ENCODE measurements at regions of chr12 and their contacts with region 1.

Region 1: GRCh38 chr12:92928962-92929915 is at the start of gene EEA1:
- DNase-seq: peak; percentile 98
- H3K4me3 Mint-ChIP-seq: peak within 1 kb of the TSS; percentile 85
- H3K27ac Mint-ChIP-seq: peak within 1 kb of the TSS; percentile 95
- H3K4me1 Mint-ChIP-seq: peaks cover 32% of the 10 kb centered on the region
- H3K27me3 Mint-ChIP-seq: no peaks in the 10 kb centered on the region
- total RNA-seq, gene EEA1: 17.5 to 17.7 TPM

Region 2: DNA sequence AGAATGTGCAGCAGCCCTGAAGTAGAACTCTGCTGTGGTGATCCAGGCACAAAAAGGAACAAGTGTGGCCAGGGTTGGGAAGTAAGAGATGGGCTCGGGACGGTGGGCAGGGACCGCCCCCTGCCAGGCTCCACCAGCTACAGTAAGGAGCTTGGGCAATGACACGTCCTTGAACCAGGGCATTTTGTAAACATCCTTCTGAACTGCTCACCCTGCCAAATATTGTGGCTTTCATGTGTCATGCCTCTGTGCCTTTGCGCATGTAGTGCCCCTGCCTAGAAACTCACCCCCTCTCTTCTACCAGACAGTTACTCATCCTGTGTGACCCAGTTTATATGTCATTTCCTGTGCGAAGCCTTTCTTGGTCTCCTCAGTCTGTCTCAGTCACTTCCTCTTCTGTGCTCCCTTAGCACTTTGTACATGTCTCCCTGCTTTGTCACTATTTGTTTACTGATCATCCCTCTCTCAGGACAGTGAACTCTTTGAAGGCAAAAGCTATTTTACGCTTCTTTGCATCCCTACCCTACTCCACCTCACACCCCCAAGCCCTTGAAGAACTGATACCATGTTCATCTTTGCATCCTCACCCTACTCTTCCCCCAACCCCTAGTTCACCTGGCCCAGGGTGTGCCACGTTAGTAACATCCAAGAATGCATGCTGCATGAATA is 335.4 kb before region 1 on chr12:
- CTCF ChIA-PET with region 1: no interaction called
- POLR2A ChIA-PET with region 1: no interaction called
- intact Hi-C with region 1: loop called (anchors 2 kb)
- DNase-seq: peak; percentile 87
- H3K4me3 Mint-ChIP-seq: peak overlapping the region; percentile 25
- H3K27ac Mint-ChIP-seq: peak overlapping the region; percentile 92
- H3K4me1 Mint-ChIP-seq: peaks cover 80% of the 10 kb centered on the region
- H3K27me3 Mint-ChIP-seq: no peaks in the 10 kb centered on the region

Region 3: DNA sequence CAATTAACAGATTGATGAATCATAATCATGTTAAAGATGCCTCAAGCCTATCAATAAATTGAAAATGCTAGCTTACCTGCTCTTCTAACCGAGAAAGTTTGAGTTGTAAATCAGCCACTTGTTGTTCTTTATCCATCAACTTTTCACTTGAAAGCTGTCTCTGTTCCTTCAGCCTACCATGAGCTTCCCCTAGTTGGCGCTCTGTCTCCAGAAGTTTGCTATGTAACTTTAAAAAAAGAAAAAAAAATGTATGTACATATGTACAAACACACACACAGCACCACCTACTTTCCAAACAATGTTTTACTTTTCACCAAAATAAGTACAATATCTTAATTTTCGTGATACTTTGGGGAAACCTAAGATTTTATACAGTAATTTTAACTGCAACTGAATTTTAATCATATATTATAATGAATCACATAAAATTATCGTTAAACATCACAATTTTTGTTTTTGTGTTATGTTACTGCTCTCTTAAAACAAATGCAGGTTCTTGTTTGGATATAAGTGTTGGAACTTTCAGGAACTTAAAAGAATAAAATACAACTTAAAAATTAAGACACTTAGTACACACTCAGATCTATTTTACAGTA is 101.3 kb before region 1 on chr12:
- CTCF ChIA-PET with region 1: interaction called, 3 read pairs
- POLR2A ChIA-PET with region 1: no interaction called
- intact Hi-C with region 1: loop called (anchors 5 kb)
- DNase-seq: peak; percentile 37
- H3K4me3 Mint-ChIP-seq: no peak overlapping the region
- H3K27ac Mint-ChIP-seq: no peak overlapping the region
- H3K4me1 Mint-ChIP-seq: no peaks in the 10 kb centered on the region
- H3K27me3 Mint-ChIP-seq: no peaks in the 10 kb centered on the region

Region 4: DNA sequence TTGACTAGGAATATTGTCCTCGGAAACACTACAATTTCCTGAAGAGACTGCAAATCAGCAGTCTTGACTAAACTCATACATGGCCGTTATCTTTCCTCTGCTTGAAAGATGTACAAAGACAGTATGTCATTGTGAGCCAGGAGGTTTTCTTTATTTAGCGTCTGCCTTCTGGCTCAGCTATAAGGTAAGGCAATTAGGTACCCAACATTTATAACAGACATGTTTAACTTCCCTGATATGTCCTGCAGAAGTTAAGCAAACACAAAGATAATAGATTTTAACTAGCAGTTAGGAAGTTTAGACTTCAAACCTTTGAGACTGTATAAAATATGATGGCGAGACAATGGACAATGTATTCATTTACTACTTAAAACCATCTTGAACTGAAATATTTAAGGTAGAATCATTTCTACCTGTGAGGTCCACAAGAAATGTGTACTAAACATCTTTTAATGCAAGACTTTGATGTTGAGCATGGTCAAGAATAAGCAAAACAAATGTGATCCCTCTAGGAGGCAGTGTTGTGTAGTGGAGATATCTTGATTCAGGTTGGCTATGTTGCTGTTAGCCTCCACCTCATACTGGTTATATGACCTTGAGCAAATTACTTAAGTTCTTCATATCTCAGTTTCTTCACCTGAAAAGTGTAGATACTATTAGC is 96.0 kb after region 1 on chr12:
- CTCF ChIA-PET with region 1: no interaction called
- POLR2A ChIA-PET with region 1: no interaction called
- intact Hi-C with region 1: no loop called
- DNase-seq: no peak
- H3K4me3 Mint-ChIP-seq: no peak overlapping the region
- H3K27ac Mint-ChIP-seq: no peak overlapping the region
- H3K4me1 Mint-ChIP-seq: no peaks in the 10 kb centered on the region
- H3K27me3 Mint-ChIP-seq: no peaks in the 10 kb centered on the region

Region 5: GRCh38 chr12:93378373-93379325 is 449.4 kb after region 1 on chr12:
- CTCF ChIA-PET with region 1: no interaction called
- POLR2A ChIA-PET with region 1: no interaction called
- intact Hi-C with region 1: loop called (anchors 1 kb)
- DNase-seq: peak; percentile 74
- H3K4me3 Mint-ChIP-seq: peak overlapping the region; percentile 99
- H3K27ac Mint-ChIP-seq: peak overlapping the region; percentile 99
- H3K4me1 Mint-ChIP-seq: peaks cover 40% of the 10 kb centered on the region
- H3K27me3 Mint-ChIP-seq: no peaks in the 10 kb centered on the region

Region 6: GRCh38 chr12:93677195-93678064 is 748.2 kb after region 1 on chr12 and contains the start of gene CRADD:
- CTCF ChIA-PET with region 1: no interaction called
- POLR2A ChIA-PET with region 1: no interaction called
- intact Hi-C with region 1: loop called (anchors 5 kb)
- DNase-seq: peak; percentile 90
- H3K4me3 Mint-ChIP-seq: peak within 1 kb of the TSS; percentile 93
- H3K27ac Mint-ChIP-seq: peak within 1 kb of the TSS; percentile 100
- H3K4me1 Mint-ChIP-seq: peaks cover 41% of the 10 kb centered on the region
- H3K27me3 Mint-ChIP-seq: peaks cover 11% of the 10 kb centered on the region
- total RNA-seq, gene CRADD: 8.9 to 10.4 TPM

Measured in activated CD4-positive, alpha-beta memory T cell treated with anti-CD3 and anti-CD28 coated beads for 36 hours (primary cell).